CD14-positive monocyte (primary cell): ENCODE measurements at regions of chr2 and their contacts with region 1.

Region 1: GRCh38 chr2:215900203-215900611 is 113.1 kb downstream of the MREG start:
- DNase-seq: peak; percentile 93 to 99 (median 98)
- H3K4me3 ChIP-seq: peak overlapping the region in 1 of 3 experiments; percentile 30
- H3K4me3 Mint-ChIP-seq: peak overlapping the region in 1 of 2 donors; percentile 78
- H3K27ac ChIP-seq: peak overlapping the region; percentile 45 to 87
- H3K27ac Mint-ChIP-seq: peak overlapping the region; percentile 94 to 98 (median 96)
- H3K4me1 ChIP-seq: peaks cover 54 to 65% of the 10 kb centered on the region in 2 donors
- H3K4me1 Mint-ChIP-seq: peaks cover 60% of the 10 kb centered on the region
- H3K27me3 ChIP-seq: no peaks in the 10 kb centered on the region
- H3K27me3 Mint-ChIP-seq: peaks cover 4 to 12% (median 6%) of the 10 kb centered on the region in 3 donors
- CTCF ChIP-seq: no peak

Region 2: GRCh38 chr2:215722986-215723630 is 177.1 kb before region 1 on chr2:
- intact Hi-C with region 1: loop called in 1 of 2 experiments (anchors 5 kb)
- DNase-seq: no peak
- H3K4me3 ChIP-seq: no peak overlapping the region
- H3K4me3 Mint-ChIP-seq: no peak overlapping the region
- H3K27ac ChIP-seq: peak overlapping the region in 1 of 2 donors; percentile 80
- H3K27ac Mint-ChIP-seq: peak overlapping the region in 2 of 7 donors; percentile 90 to 96
- H3K4me1 ChIP-seq: peaks cover 27 to 49% of the 10 kb centered on the region in 2 donors
- H3K4me1 Mint-ChIP-seq: peaks cover 46% of the 10 kb centered on the region
- H3K27me3 ChIP-seq: no peaks in the 10 kb centered on the region
- H3K27me3 Mint-ChIP-seq: peaks cover 0 to 2% (median 0%) of the 10 kb centered on the region in 3 donors
- CTCF ChIP-seq: no peak

Region 3: DNA sequence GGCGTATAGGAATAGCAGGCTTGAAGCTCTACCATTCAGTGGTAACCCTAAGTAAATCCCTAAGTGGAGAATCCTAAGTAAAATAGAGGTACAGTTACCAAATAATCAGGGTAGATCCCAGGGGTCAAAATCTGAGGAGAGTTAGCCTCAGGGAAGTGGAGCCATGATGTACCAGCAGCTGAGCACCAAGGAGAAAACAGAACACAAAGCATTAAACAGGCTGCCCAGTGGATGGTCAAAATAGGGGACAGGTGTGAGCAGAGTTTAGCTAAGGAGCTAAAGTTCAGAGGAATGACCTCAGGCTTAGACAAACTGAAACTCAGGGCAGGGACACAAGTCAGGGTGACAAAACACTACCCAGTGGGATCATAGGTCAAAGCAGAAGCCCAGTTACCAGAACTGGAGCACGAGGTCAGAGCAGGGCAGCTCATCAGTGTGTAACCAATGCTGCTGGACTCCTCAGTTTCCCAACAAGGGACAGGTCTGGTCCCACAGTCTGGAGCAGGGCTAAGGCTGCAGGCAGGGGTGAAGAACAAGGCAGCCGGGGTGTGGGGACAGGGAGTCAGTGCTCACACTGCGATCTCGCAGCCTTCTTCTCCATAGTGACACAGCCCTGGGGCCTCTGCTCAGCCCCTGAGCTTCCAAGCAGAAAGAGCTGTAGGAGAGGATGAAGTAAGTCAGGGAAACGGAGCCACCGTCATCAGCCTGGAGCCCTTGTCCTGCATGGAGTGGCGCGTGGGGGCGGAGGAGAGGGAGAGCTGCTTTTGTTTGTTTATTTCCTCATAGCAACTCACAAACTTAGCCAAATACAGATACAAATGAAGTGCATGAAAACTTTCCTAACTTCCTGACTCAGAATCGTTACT is 150.9 kb before region 1 on chr2:
- intact Hi-C with region 1: loop called in 1 of 2 experiments (anchors 5 kb)
- DNase-seq: peak; percentile 78 to 83 (median 81)
- H3K4me3 ChIP-seq: no peak overlapping the region
- H3K4me3 Mint-ChIP-seq: peak overlapping the region in 1 of 2 donors; percentile 53
- H3K27ac ChIP-seq: peak overlapping the region; percentile 67 to 86
- H3K27ac Mint-ChIP-seq: peak overlapping the region; percentile 89 to 98 (median 97)
- H3K4me1 ChIP-seq: peaks cover 46 to 57% of the 10 kb centered on the region in 2 donors
- H3K4me1 Mint-ChIP-seq: peaks cover 62% of the 10 kb centered on the region
- H3K27me3 ChIP-seq: no peaks in the 10 kb centered on the region
- H3K27me3 Mint-ChIP-seq: peaks cover 0 to 23% (median 16%) of the 10 kb centered on the region in 3 donors
- CTCF ChIP-seq: no peak

Region 4: DNA sequence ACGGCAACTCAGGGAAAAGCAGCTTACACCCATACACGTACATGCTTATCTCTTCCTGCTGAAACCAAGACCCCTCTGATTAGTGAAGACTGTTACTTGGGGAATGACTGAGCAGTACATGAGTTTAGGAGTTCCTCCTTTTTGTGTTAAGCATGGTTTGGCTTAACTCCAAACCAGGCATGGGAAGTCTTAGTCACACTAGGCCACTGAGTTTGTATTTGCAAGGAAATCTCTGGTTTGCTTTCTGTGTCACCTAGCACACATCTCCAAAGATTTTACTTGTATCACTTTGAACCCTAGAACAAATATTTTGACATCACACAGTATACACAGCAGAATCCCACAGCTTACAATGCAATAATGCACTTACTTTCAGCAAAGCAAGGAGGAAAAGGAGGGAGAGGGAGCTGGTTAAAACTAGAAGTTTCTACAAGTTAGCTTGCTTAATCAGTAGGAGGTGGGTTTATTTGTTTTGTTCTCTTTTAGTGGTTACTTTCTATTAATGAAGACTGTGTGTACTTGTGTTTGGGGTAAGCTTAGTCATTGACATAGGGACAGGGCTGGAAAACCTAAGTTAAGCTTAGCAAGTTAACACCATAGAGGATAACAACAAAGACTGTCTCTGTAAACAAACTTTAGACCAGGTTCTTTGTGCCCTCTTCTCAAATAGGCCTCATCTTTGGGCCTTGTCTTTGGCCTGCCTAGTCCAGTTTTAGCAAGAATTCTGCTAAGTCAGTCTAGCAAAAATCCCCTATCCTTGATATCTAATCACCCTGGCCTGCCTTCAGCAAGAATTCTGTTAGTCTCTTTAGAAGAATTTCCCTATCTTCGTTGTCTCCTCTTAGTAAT is 106.2 kb before region 1 on chr2:
- intact Hi-C with region 1: loop called in 1 of 2 experiments (anchors 5 kb)
- DNase-seq: peak; percentile 91 to 96 (median 92)
- H3K4me3 ChIP-seq: peak overlapping the region in 1 of 3 experiments; percentile 29
- H3K4me3 Mint-ChIP-seq: peak overlapping the region in 1 of 2 donors; percentile 63
- H3K27ac ChIP-seq: peak overlapping the region; percentile 19 to 88
- H3K27ac Mint-ChIP-seq: peak overlapping the region; percentile 92 to 97 (median 95)
- H3K4me1 ChIP-seq: peaks cover 51 to 73% of the 10 kb centered on the region in 2 donors
- H3K4me1 Mint-ChIP-seq: peaks cover 66% of the 10 kb centered on the region
- H3K27me3 ChIP-seq: no peaks in the 10 kb centered on the region
- H3K27me3 Mint-ChIP-seq: peaks cover 0 to 2% (median 1%) of the 10 kb centered on the region in 3 donors
- CTCF ChIP-seq: no peak

Region 5: GRCh38 chr2:215843579-215843978 is 56.6 kb before region 1 on chr2:
- intact Hi-C with region 1: loop called (anchors 5 to 10 kb)
- DNase-seq: peak; percentile 22 to 68 (median 46)
- H3K4me3 ChIP-seq: no peak overlapping the region
- H3K4me3 Mint-ChIP-seq: no peak overlapping the region
- H3K27ac ChIP-seq: no peak overlapping the region
- H3K27ac Mint-ChIP-seq: no peak overlapping the region
- H3K4me1 ChIP-seq: peaks cover 37 to 43% of the 10 kb centered on the region in 2 donors
- H3K4me1 Mint-ChIP-seq: peaks cover 35% of the 10 kb centered on the region
- H3K27me3 ChIP-seq: peaks cover 0 to 2% of the 10 kb centered on the region in 2 donors
- H3K27me3 Mint-ChIP-seq: peaks cover 1 to 5% (median 2%) of the 10 kb centered on the region in 3 donors
- CTCF ChIP-seq: no peak

Region 6: GRCh38 chr2:215973954-215974702 is 73.9 kb after region 1 on chr2:
- intact Hi-C with region 1: no loop called
- DNase-seq: peak; percentile 35 to 65 (median 48)
- H3K4me3 ChIP-seq: peak overlapping the region in 1 of 3 experiments; percentile 32
- H3K4me3 Mint-ChIP-seq: peak overlapping the region in 1 of 2 donors; percentile 80
- H3K27ac ChIP-seq: peak overlapping the region in 1 of 2 donors; percentile 45
- H3K27ac Mint-ChIP-seq: peak overlapping the region in 6 of 7 donors; percentile 3 to 69 (median 42)
- H3K4me1 ChIP-seq: peaks cover 16 to 17% of the 10 kb centered on the region in 2 donors
- H3K4me1 Mint-ChIP-seq: peaks cover 18% of the 10 kb centered on the region
- H3K27me3 ChIP-seq: no peaks in the 10 kb centered on the region
- H3K27me3 Mint-ChIP-seq: peaks cover 0 to 1% (median 0%) of the 10 kb centered on the region in 3 donors
- CTCF ChIP-seq: no peak